GM10248 (cell line): ENCODE measurements at regions of chr17 and their contacts with region 1.

Region 1: GRCh38 chr17:78736526-78737079 is 45.5 kb downstream of the CYTH1 start:
- DNase-seq: peak; percentile 62
- CTCF ChIP-seq: no peak

Region 2: GRCh38 chr17:78484300-78485246 is 252.0 kb before region 1 on chr17:
- CTCF ChIA-PET with region 1: no interaction called
- POLR2A ChIA-PET with region 1: no interaction called
- DNase-seq: peak; percentile 87
- CTCF ChIP-seq: no peak

Region 3: GRCh38 chr17:78665952-78666920 is 70.4 kb before region 1 on chr17:
- CTCF ChIA-PET with region 1: no interaction called
- POLR2A ChIA-PET with region 1: no interaction called
- DNase-seq: no peak
- CTCF ChIP-seq: no peak

Region 4: DNA sequence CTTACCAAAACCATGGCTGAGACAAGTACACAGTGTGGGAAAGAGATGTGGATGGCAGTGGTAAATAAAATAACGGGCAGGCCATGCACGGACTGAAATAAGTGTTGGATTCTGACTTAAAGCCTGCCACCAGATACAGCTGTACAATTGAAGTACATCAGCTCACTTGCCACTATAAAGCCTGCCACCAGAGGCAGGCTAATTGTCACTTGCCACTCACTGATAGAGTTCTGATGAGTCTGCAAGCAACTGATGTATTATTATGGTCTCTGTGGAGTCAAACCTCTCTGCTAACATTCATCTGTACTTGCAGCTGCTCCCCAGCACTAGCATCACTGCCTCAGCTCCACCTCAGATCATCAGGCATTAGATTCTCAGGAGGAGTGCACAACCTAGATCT is 47.6 kb before region 1 on chr17:
- CTCF ChIA-PET with region 1: no interaction called
- POLR2A ChIA-PET with region 1: no interaction called
- DNase-seq: no peak
- CTCF ChIP-seq: peak; percentile 22

Region 5: GRCh38 chr17:78716814-78717393 is 19.7 kb before region 1 on chr17:
- CTCF ChIA-PET with region 1: interaction called, 18 read pairs
- POLR2A ChIA-PET with region 1: interaction called, 3 read pairs
- DNase-seq: no peak
- CTCF ChIP-seq: no peak

Region 6: DNA sequence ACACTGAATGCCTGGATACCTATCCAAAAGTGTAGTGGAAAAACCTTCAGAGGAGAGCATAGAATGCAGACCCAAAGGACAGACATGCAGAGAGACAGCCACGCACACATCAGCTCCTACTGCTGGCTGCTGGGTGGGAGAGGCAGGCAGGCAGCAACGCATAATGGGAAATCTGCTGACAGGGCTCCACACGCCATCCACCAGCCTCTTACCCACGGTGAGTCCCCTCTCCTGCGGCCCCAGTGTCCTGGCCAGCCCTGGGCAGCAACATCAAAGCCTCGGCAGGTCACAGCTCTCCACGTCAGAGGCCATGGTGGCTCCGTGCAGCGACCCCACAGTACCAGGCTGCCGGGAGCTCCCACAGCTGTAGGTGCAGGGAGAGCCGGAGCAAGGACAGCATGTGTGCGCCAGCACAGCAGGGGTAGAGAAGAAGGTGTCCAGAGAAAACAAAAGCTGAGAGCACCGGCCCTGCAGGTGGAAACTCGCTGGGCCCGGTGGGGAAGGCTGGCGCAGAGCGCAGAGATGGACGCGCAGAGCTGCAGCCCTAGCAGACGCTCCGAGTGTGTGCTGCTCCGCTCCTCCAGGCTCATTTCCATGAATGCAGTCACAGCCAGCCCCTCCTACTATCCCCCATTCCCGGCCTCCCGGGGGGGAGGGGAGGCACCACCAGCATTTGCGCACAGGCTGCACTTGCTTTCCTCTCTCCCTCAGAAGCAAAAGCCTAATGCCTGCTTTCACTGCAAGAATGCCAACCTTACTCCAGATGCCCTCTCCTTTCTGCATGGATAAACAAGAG is 13.4 kb before region 1 on chr17:
- CTCF ChIA-PET with region 1: interaction called, 18 read pairs
- POLR2A ChIA-PET with region 1: interaction called, 4 read pairs
- DNase-seq: no peak
- CTCF ChIP-seq: no peak

Region 7: DNA sequence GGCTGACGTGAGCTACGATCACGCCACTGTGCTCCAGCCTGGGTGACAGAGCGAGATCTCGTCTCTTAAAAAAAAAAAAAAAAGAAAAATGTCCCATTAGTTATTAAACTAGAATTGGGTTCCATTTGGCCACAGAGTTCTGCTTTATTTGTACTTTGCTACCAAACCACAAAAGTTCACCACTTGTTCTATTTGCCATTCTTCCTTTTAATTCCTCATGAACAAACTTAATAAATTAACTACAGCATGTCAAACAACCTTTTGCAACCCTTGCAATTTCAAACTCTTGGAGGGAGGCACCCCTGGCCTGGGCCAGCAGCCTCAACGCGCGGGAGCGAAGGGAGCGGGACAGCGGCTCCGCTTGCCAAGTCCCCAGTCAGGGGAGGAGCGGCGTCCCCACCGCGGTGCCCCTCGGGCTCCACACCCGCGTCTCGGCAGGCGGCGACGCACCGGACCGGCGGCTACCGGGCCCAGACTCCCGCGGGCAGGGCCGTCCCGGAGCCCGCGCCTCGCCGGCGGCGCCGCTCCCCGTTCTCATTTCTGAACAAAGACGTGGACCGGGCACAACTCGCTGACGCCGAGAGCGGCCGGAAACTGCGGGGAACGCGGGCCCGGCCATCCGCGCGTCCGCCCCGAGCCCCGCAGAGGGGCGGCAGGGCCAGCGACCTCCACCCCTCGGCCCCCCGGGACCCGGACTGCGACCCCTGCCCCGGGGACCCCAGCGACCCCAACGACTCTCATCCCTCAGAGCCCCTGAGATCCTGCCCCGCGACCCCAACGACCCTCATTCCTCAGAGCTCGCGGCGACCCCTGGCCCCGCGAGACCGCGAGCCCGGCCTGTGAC is 44.7 kb after region 1 on chr17:
- CTCF ChIA-PET with region 1: interaction called, 12 read pairs
- POLR2A ChIA-PET with region 1: interaction called, 11 read pairs
- DNase-seq: no peak
- CTCF ChIP-seq: no peak